ENCODE measurements at regions of chr1 and their contacts with region 1.

Region 1: DNA sequence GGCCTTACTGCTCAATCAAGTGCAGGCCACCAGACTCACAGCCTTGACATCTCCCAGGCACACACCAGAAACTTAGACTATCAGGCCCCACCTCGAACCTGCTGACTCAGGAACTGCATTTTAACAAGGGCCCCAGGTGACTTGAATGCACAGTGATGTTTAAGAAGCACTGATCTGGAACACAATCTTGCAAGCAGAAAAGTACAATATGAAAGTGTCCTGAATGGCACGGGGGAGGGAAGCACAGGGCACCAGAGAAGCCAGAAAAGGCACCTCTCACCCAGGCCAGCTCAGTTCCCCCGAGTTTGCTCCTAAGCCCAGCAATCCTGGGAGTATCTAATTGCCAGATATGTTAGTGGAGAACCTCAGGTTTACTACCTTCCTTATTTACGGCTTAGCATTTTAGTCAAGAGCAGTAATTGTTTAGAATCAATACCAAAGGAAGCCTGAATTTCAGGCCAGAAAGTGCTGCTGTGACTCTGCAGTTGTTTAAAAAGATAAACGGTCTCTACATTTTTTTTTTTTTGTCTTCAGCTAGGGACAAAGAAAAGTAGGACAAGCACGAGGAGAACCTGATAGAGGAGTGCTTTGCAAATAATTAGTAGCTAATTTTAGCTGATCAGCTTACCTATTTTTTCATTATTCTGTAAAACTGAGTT is 50.9 kb upstream of the CDC42BPA start:
- DNase-seq: no peak
- ATAC-seq: no peak
- H3K4me3 ChIP-seq: no peak overlapping the region
- H3K27ac ChIP-seq: no peak overlapping the region
- H3K4me1 ChIP-seq: no peaks in the 10 kb centered on the region
- H3K27me3 ChIP-seq: no peaks in the 10 kb centered on the region
- CTCF ChIP-seq: no peak

Region 2: DNA sequence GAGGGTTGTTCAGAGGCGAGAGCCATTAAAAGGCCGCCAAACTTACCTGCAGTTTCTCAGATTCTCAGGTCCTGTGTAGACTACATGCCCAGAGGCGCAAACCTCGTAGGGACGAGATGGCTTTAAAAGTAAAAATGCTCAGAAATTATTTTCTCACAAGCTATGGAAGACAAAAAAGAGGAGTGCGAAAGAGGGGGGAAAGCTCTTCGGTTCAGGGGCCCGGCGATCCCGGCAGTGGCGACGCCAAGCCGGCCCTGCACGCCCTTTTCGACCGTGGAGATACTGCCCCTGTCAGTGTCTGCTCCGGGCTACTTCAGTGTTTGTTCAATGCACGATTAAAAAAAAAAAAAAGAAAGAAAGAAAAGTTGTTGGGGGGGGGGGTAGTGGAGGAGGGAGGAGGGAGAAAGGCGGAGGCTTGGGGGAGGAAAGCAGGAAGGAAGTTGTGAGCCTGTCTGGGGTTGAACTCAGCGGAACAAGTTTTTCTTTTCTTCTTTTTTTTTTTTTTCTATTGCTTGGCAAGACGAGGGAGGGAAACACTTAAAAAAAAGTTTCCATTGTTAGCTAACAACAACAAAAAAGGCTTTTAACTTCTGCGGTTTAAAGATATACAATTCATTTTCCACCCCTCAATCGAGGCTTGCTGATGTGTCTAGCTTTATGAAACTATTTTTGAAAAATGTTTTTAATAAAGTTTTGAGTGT is 630.1 kb before region 1 on chr1 and contains the start of gene ITPKB:
- intact Hi-C with region 1: no loop called
- DNase-seq: peak; percentile 70 to 89 (median 78)
- ATAC-seq: peak; percentile 66
- H3K4me3 ChIP-seq: peak within 1 kb of the TSS; percentile 68 to 90
- H3K27ac ChIP-seq: peak within 1 kb of the TSS; percentile 85 to 90
- H3K4me1 ChIP-seq: peaks cover 21 to 42% of the 10 kb centered on the region in 2 donors
- H3K27me3 ChIP-seq: no peaks in the 10 kb centered on the region
- CTCF ChIP-seq: no peak
- polyA plus RNA-seq, gene ITPKB: 28.5 to 38.7 (median 32.6) TPM

Region 3: GRCh38 chr1:227428803-227429202 is 59.6 kb after region 1 on chr1:
- intact Hi-C with region 1: loop called in 1 of 2 experiments (anchors 10 kb)
- DNase-seq: peak in 1 of 4 donors; percentile 44
- ATAC-seq: no peak
- H3K4me3 ChIP-seq: no peak overlapping the region
- H3K27ac ChIP-seq: peak overlapping the region in 1 of 2 donors; percentile 50
- H3K4me1 ChIP-seq: peaks cover 0 to 22% of the 10 kb centered on the region in 2 donors
- H3K27me3 ChIP-seq: no peaks in the 10 kb centered on the region
- CTCF ChIP-seq: no peak

Region 4: DNA sequence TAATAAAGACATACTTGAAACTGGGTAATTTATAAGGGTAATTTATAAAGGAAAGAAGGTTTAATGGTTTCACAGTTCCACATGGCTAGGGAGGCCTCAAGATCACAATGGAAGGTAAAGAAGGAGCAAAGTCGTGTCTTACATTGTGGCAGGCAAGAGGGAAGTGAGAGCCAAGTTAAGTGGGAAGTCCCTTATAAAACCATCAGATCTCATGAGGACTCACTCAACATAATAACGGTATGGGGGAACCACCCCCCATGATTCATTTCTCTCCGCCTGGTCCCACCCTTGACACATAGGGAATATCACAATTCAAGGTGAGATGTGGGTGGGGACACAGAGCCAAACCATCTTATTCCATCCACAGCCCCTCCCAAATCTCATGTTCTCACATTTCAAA is 117.3 kb after region 1 on chr1:
- intact Hi-C with region 1: no loop called
- DNase-seq: no peak
- ATAC-seq: no peak
- H3K4me3 ChIP-seq: no peak overlapping the region
- H3K27ac ChIP-seq: no peak overlapping the region
- H3K4me1 ChIP-seq: no peaks in the 10 kb centered on the region
- H3K27me3 ChIP-seq: no peaks in the 10 kb centered on the region
- CTCF ChIP-seq: no peak

Region 5: GRCh38 chr1:227558732-227559262 is 189.6 kb after region 1 on chr1:
- intact Hi-C with region 1: no loop called
- DNase-seq: peak in 1 of 4 donors; percentile 64
- ATAC-seq: no peak
- H3K4me3 ChIP-seq: no peak overlapping the region
- H3K27ac ChIP-seq: no peak overlapping the region
- H3K4me1 ChIP-seq: peaks cover 0 to 3% of the 10 kb centered on the region in 2 donors
- H3K27me3 ChIP-seq: peaks cover 14 to 52% of the 10 kb centered on the region in 2 donors
- CTCF ChIP-seq: no peak

Measured in left lung (tissue), 14 donors.